ENCODE measurements at regions of chr6 and their contacts with region 1.

Region 1: GRCh38 chr6:105363100-105363754 is 39.7 kb downstream of the PREP start:
- DNase-seq: no peak
- ATAC-seq: no peak

Region 2: DNA sequence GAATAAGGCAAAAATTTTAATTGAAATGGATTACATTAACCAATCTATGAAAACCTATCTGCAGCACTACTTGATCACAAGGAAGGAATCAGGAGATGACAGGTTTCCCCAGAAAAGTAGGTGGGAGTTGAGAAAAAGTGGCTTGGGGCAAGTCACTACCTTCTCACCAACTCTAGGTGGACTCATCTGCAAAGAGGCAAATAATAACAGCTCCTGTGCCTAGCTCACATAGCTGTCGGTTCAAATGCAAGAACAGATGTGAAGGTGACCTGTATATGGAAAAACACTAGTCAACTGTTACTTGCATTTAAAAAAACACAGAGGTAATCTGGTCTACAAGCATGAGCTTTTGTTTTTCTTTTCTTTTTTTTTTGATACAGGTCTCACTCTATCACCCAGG is 250.7 kb before region 1 on chr6:
- intact Hi-C with region 1: no loop called
- DNase-seq: no peak
- ATAC-seq: no peak

Region 3: GRCh38 chr6:105136431-105137350 is 226.5 kb before region 1 on chr6:
- intact Hi-C with region 1: loop called (anchors 10 kb)
- DNase-seq: peak; percentile 83
- ATAC-seq: peak; percentile 90

Region 4: GRCh38 chr6:105424175-105424783 is 61.1 kb after region 1 on chr6:
- intact Hi-C with region 1: no loop called
- DNase-seq: no peak
- ATAC-seq: peak; percentile 70

Region 5: DNA sequence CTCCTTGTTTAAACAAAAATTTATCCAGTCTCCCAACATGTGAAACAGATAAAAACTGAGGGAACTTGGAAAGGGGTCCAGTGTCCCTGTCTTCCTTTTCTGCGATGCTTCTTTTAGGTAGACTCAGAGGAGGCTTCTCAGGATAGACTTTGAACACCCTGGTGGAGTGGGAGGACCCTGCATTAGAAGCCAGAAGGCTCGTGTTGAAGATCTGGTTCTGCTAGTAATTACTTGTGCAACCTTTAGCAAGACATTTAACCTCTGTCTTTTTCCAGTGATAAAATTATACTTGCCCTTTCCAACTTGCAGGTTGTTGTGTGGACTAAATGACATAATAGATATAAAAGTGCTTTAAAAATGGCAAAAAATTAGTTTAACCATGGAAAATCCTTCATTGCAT is 106.7 kb after region 1 on chr6:
- intact Hi-C with region 1: no loop called
- DNase-seq: no peak
- ATAC-seq: no peak

Region 6: GRCh38 chr6:106005013-106005412 is 641.8 kb after region 1 on chr6:
- intact Hi-C with region 1: no loop called
- DNase-seq: no peak
- ATAC-seq: no peak